ENCODE measurements at regions of chr1 and their contacts with region 1.

Region 1: GRCh38 chr1:160078512-160079195 is 2.7 kb upstream of the KCNJ9 start:
- DNase-seq: peak; percentile 33
- ATAC-seq: peak; percentile 81
- H3K4me3 Mint-ChIP-seq: no peak overlapping the region
- H3K27ac Mint-ChIP-seq: no peak overlapping the region
- H3K4me1 Mint-ChIP-seq: peaks cover 4% of the 10 kb centered on the region
- H3K27me3 Mint-ChIP-seq: peaks cover 53% of the 10 kb centered on the region
- CTCF ChIP-seq: no peak

Region 2: DNA sequence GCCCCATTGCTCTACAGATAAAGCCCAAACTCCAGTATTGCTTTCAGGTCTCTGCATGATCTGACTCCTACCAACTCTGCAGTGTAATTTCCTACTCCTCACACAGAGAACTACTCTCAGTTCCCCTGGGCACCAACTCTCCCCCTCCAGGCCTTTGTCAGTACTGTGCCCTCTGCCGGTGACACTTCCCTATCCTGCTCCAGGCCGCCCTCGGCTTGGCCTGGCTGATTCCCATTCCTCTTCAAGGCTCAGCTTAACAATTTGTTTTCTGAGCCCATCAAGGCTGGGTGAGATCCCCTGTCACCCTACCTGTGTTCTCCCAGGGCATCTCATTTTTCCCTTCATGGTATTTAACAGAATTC is 249.4 kb before region 1 on chr1:
- CTCF ChIA-PET with region 1: no interaction called
- POLR2A ChIA-PET with region 1: no interaction called
- intact Hi-C with region 1: loop called (anchors 10 kb)
- DNase-seq: no peak
- ATAC-seq: peak; percentile 94
- H3K4me3 Mint-ChIP-seq: no peak overlapping the region
- H3K27ac Mint-ChIP-seq: peak overlapping the region; percentile 16
- H3K4me1 Mint-ChIP-seq: peaks cover 15% of the 10 kb centered on the region
- H3K27me3 Mint-ChIP-seq: peaks cover 6% of the 10 kb centered on the region
- CTCF ChIP-seq: no peak

Region 3: DNA sequence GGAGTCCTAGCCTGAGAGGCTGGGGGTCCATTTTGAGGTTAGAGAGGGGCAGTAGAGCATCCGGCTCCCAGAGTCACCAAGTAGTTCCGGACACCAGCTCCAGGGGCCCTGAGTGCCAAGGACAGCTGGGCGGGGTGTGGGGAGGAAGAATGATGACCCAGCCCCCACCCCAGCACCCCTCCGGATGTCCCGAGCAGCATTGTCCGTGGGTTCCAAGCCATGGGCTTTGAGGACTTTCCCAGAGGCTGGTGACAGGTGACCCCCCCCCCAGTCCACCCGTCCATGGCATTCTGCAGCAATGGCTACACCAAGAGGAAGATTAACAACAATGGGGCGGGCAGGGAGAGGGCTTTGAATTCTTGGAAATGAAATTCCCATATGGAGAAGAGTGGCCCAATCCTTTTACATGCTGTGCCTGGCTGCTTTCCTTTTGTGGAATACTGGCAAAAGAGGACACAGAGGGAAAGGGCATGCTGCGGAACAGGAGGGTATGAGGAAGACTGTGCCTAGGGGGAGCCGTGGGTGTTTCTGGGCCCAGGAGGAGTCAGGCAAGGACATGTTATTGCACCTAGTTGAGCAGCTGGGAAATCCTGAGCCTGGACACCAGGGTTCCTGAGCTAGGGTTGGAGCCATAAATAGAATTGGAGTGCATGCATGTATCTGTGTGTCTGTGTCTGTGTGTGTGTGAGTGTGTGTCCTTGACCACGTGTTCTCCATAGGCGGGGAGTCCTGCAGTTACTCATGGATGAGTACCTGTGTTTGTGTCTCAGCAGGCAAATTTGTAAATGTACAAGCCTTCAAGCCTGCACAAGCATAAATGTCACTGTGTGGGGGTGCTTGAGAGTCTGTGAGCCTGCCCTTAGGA is 37.9 kb after region 1 on chr1:
- CTCF ChIA-PET with region 1: no interaction called
- POLR2A ChIA-PET with region 1: no interaction called
- intact Hi-C with region 1: no loop called
- DNase-seq: no peak
- ATAC-seq: no peak
- H3K4me3 Mint-ChIP-seq: no peak overlapping the region
- H3K27ac Mint-ChIP-seq: no peak overlapping the region
- H3K4me1 Mint-ChIP-seq: no peaks in the 10 kb centered on the region
- H3K27me3 Mint-ChIP-seq: peaks cover 18% of the 10 kb centered on the region
- CTCF ChIP-seq: no peak

Measured in activated B cell treated with CpG ODN at 0.5 μM for 24 hours (primary cell).